Motor neuron (in vitro differentiated cells): ENCODE measurements at regions of chr15 and their contacts with region 1.

Region 1: DNA sequence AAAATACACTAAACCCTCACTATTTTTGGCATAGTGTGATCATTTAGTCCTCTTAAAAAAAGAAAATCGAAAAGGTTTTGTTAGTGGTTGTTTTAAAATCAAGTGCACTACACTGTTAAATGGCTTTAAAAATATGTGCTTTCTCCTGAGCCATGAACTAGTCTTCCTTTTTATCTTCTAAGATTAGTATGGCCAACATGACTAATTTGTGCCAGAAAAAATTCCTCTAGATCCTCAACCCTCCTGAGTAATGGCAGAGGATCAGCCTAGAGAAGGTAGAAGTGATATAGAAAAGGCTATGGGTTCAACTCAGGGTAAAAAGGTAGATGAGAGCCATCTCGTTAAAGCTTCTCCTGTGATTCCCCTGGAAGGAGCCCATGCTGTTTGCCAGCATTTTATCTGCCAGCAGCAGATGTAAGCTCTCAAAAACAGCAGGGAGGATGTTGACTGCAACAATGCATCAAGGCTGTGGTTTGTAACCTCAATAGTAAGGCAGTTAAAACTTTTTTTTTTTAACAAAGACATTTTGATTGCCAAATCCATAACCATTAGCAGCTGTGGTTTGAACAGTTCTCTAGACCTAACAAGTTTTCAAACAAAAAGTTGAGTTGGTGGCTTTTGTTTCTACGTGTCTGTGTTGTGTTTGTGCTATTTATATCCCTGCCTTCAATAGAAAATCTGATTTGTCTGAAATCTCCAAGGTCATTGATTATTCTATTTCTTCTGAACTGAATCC is 30.2 kb upstream of the ZNF609 start:
- ATAC-seq: peak in 2 of 8 experiments; percentile 59 to 70
- H3K4me3 ChIP-seq: no peak overlapping the region
- H3K27ac ChIP-seq: no peak overlapping the region
- H3K4me1 ChIP-seq: peaks cover 3 to 5% of the 10 kb centered on the region in 2 donors

Region 2: GRCh38 chr15:64651573-64652260 is 221.5 kb after region 1 on chr15:
- in situ Hi-C with region 1: loop called in 1 of 9 experiments (anchors 25 kb)
- ATAC-seq: peak in 5 of 8 experiments; percentile 12 to 78 (median 66)
- H3K4me3 ChIP-seq: no peak overlapping the region
- H3K27ac ChIP-seq: peak overlapping the region in 1 of 2 donors; percentile 32
- H3K4me1 ChIP-seq: no peaks in the 10 kb centered on the region

Region 3: GRCh38 chr15:64681424-64682024 is 251.4 kb after region 1 on chr15:
- in situ Hi-C with region 1: loop called in 1 of 9 experiments (anchors 25 kb)
- ATAC-seq: peak; percentile 87 to 95 (median 90)
- H3K4me3 ChIP-seq: no peak overlapping the region
- H3K27ac ChIP-seq: no peak overlapping the region
- H3K4me1 ChIP-seq: no peaks in the 10 kb centered on the region